CD4-positive, alpha-beta memory T cell (primary cell): ENCODE measurements at regions of chr17 and their contacts with region 1.

Region 1: GRCh38 chr17:75749545-75750389 is 15.2 kb downstream of the GALK1 start:
- DNase-seq: peak; percentile 77 to 83 (median 78)
- H3K4me3 ChIP-seq: no peak overlapping the region
- H3K4me3 Mint-ChIP-seq: peak overlapping the region in 4 of 8 donors; percentile 31 to 49 (median 34)
- H3K27ac ChIP-seq: no peak overlapping the region
- H3K27ac Mint-ChIP-seq: peak overlapping the region in 3 of 7 donors; percentile 45 to 77 (median 65)
- H3K4me1 ChIP-seq: peaks cover 22% of the 10 kb centered on the region
- H3K4me1 Mint-ChIP-seq: peaks cover 10 to 30% (median 18%) of the 10 kb centered on the region in 4 donors
- H3K27me3 ChIP-seq: no peaks in the 10 kb centered on the region
- H3K27me3 Mint-ChIP-seq: peaks cover 0 to 3% of the 10 kb centered on the region in 2 donors

Region 2: GRCh38 chr17:75601057-75602051 is 148.4 kb before region 1 on chr17:
- CTCF ChIA-PET with region 1: interaction called, 34 read pairs
- POLR2A ChIA-PET with region 1: no interaction called
- intact Hi-C with region 1: no loop called
- DNase-seq: peak; percentile 41 to 62 (median 46)
- H3K4me3 ChIP-seq: no peak overlapping the region
- H3K4me3 Mint-ChIP-seq: no peak overlapping the region
- H3K27ac ChIP-seq: no peak overlapping the region
- H3K27ac Mint-ChIP-seq: peak overlapping the region in 1 of 7 donors; percentile 30
- H3K4me1 ChIP-seq: no peaks in the 10 kb centered on the region
- H3K4me1 Mint-ChIP-seq: peaks cover 0 to 3% (median 0%) of the 10 kb centered on the region in 4 donors
- H3K27me3 ChIP-seq: no peaks in the 10 kb centered on the region
- H3K27me3 Mint-ChIP-seq: no peaks in the 10 kb centered on the region

Region 3: DNA sequence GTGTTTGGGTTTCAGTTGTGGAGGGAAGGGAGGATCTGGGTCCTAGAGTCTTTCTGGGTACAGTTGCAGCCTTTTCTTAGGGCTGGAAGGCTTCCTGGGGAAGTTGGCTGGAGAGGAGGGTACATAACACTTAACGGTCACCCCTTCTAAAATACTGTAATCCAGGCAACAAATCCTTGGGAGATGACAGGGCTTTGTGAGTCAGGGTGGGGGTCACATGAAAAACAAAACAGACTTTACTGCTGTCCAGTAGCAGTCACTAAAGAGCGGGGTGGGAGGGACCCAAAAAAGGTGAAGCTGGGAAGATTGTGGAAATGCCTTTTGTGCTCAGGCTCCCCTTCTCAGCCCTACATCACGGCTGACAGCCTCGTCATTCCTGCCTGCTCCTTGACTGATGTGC is 76.3 kb before region 1 on chr17:
- CTCF ChIA-PET with region 1: interaction called, 162 read pairs
- POLR2A ChIA-PET with region 1: interaction called, 5 read pairs
- intact Hi-C with region 1: loop called (anchors 1 kb)
- DNase-seq: no peak
- H3K4me3 ChIP-seq: no peak overlapping the region
- H3K4me3 Mint-ChIP-seq: peak overlapping the region in 1 of 8 donors; percentile 9
- H3K27ac ChIP-seq: no peak overlapping the region
- H3K27ac Mint-ChIP-seq: peak overlapping the region in 2 of 7 donors; percentile 20 to 32
- H3K4me1 ChIP-seq: peaks cover 11% of the 10 kb centered on the region
- H3K4me1 Mint-ChIP-seq: peaks cover 13 to 26% (median 18%) of the 10 kb centered on the region in 4 donors
- H3K27me3 ChIP-seq: no peaks in the 10 kb centered on the region
- H3K27me3 Mint-ChIP-seq: no peaks in the 10 kb centered on the region

Region 4: DNA sequence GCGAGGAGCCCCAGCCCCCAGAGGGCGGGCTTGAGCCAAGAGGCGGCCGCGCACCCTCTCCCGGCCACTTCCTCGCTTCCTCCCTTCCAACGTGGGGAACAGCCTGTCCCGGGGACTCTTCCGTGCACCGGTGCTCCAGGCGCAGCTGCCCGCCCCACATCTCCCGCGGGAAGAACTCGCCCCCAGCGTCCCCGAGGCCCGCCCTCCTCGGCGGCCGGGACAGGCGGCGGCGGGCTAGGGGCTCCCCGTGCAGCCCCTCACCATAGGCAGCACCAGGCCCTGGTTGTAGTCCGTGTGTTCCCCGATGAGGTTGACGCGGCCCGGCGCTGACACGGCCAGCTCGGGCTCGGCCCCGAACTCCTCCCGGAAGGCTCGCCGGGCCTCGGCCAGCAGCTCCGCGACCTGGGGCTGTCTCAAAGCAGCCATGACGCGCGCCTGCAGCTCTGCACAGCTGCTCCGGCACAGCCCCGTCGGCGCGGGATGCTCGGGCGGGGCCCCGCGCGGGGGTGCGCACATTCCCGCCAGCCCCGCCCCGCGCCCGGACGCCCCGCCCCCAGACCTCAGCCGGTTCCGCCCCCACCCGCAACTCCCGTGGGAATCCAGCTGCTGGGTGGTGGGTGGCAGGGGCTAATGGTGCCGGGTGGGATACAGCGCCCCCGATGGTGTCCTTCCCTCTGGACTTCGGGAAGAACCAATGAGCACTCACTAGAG is 15.1 kb after region 1 on chr17 and contains the start of gene GALK1:
- CTCF ChIA-PET with region 1: interaction called, 68 read pairs
- POLR2A ChIA-PET with region 1: interaction called, 36 read pairs
- intact Hi-C with region 1: loop called (anchors 1 kb)
- DNase-seq: peak; percentile 67 to 73 (median 72)
- H3K4me3 ChIP-seq: peak within 1 kb of the TSS; percentile 42 to 73
- H3K4me3 Mint-ChIP-seq: peak within 1 kb of the TSS; percentile 72 to 83 (median 78)
- H3K27ac ChIP-seq: peak within 1 kb of the TSS; percentile 58
- H3K27ac Mint-ChIP-seq: peak within 1 kb of the TSS; percentile 52 to 88 (median 72)
- H3K4me1 ChIP-seq: peaks cover 17% of the 10 kb centered on the region
- H3K4me1 Mint-ChIP-seq: peaks cover 6 to 26% (median 10%) of the 10 kb centered on the region in 4 donors
- H3K27me3 ChIP-seq: no peaks in the 10 kb centered on the region
- H3K27me3 Mint-ChIP-seq: no peaks in the 10 kb centered on the region
- total RNA-seq, gene GALK1: 25.7 to 25.9 TPM

Region 5: GRCh38 chr17:75827252-75828115 is 77.7 kb after region 1 on chr17:
- CTCF ChIA-PET with region 1: interaction called, 19 read pairs
- POLR2A ChIA-PET with region 1: interaction called, 15 read pairs
- intact Hi-C with region 1: no loop called
- DNase-seq: peak; percentile 55 to 80 (median 71)
- H3K4me3 ChIP-seq: no peak overlapping the region
- H3K4me3 Mint-ChIP-seq: peak overlapping the region; percentile 17 to 73 (median 56)
- H3K27ac ChIP-seq: peak overlapping the region; percentile 59
- H3K27ac Mint-ChIP-seq: peak overlapping the region; percentile 66 to 91 (median 83)
- H3K4me1 ChIP-seq: peaks cover 26% of the 10 kb centered on the region
- H3K4me1 Mint-ChIP-seq: peaks cover 5 to 24% (median 14%) of the 10 kb centered on the region in 4 donors
- H3K27me3 ChIP-seq: no peaks in the 10 kb centered on the region
- H3K27me3 Mint-ChIP-seq: no peaks in the 10 kb centered on the region

Region 6: DNA sequence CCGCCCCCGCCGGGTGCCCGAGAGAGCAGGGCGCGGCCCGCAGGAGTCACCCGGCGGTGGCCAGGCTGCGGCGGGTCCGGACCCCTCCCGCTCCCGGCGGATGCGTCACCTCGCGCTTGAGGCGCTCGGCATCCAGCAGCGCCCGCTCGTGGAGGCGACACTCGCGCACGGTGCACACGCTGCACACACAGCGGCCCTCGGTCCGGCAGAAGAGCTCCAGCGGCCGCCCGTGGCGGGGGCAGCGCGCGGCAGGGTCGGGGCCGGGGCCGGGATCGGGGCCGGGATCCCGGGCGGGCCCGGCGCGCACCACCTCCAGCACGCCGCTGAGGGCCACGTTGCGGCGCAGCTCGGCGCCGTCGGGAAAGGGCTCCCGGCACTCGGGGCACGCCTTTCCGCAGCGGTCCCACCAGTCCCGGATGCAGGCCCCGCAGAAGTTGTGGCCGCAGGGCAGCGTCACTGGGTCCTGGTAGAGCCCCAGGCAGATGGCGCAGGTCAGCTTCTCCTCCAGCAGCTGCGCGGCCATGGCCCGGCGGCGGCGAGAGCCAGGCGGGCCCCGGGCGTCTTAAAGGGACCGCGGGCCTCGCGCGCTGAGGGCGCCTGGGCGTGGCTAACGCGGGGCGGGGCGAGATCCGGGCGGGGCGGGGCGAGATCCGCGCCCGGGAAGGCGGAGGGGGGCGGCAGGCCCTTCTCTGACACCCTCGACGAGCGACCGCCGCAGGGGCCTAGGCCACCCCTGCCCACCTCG is 146.8 kb after region 1 on chr17 and contains the start of gene TRIM65:
- CTCF ChIA-PET with region 1: interaction called, 8 read pairs
- POLR2A ChIA-PET with region 1: interaction called, 14 read pairs
- intact Hi-C with region 1: no loop called
- DNase-seq: peak; percentile 70 to 79 (median 73)
- H3K4me3 ChIP-seq: peak within 1 kb of the TSS; percentile 61 to 64
- H3K4me3 Mint-ChIP-seq: peak within 1 kb of the TSS; percentile 82 to 90 (median 86)
- H3K27ac ChIP-seq: peak within 1 kb of the TSS; percentile 55
- H3K27ac Mint-ChIP-seq: peak within 1 kb of the TSS; percentile 84 to 97 (median 89)
- H3K4me1 ChIP-seq: peaks cover 28% of the 10 kb centered on the region
- H3K4me1 Mint-ChIP-seq: peaks cover 22 to 28% (median 25%) of the 10 kb centered on the region in 4 donors
- H3K27me3 ChIP-seq: no peaks in the 10 kb centered on the region
- H3K27me3 Mint-ChIP-seq: no peaks in the 10 kb centered on the region
- total RNA-seq, gene TRIM65: 36.5 to 36.9 TPM